HEK293 (cell line): ENCODE measurements at regions of chr20 and their contacts with region 1.

Region 1: GRCh38 chr20:39066471-39067242 is 104.5 kb downstream of the DHX35 start:
- H3K4me3 ChIP-seq: no peak overlapping the region
- H3K27ac ChIP-seq: no peak overlapping the region
- H3K4me1 ChIP-seq: no peaks in the 10 kb centered on the region
- CTCF ChIP-seq: no peak

Region 2: DNA sequence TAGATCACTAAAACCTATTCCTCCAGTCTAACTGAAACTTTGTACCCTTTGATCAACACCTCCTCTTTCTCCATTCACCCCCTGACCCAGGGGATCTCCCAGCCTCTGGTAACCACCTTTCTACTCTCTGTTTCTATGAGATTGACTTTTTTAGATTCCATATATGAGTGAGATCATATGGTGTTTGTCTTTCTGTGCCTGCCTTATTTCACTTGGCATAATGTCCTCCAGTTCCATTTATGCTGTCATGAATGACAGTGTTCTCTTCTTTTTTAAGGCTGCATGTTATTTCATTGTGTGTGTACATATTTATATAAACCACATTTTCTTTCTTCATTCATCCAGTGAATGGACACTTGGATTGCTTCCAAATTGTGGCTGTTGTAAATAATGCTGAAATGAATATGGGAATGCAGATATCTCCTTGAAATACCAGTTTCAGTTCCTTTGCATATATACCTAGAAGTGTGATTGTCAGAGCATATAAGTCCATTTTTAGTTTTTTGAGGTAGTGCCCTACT is 46.8 kb before region 1 on chr20:
- CTCF ChIA-PET with region 1: no interaction called
- POLR2A ChIA-PET with region 1: no interaction called
- H3K4me3 ChIP-seq: no peak overlapping the region
- H3K27ac ChIP-seq: no peak overlapping the region
- H3K4me1 ChIP-seq: no peaks in the 10 kb centered on the region
- CTCF ChIP-seq: no peak

Region 3: GRCh38 chr20:39081255-39081654 is 14.6 kb after region 1 on chr20:
- CTCF ChIA-PET with region 1: interaction called, 12 read pairs
- POLR2A ChIA-PET with region 1: no interaction called
- H3K4me3 ChIP-seq: no peak overlapping the region
- H3K27ac ChIP-seq: no peak overlapping the region
- H3K4me1 ChIP-seq: no peaks in the 10 kb centered on the region
- CTCF ChIP-seq: peak; percentile 56; the same call in 1 of the 2 replicates